CD8-positive, alpha-beta T cell (primary cell): ENCODE measurements at regions of chr16 and their contacts with region 1.

Region 1: GRCh38 chr16:2752035-2752849 is at the start of gene SRRM2:
- DNase-seq: peak; percentile 90 to 98 (median 95)
- ATAC-seq: peak; percentile 85
- H3K4me3 ChIP-seq: peak within 1 kb of the TSS; percentile 91 to 100
- H3K4me3 Mint-ChIP-seq: peak within 1 kb of the TSS; percentile 94
- H3K27ac ChIP-seq: peak within 1 kb of the TSS; percentile 96 to 99
- H3K27ac Mint-ChIP-seq: peak within 1 kb of the TSS; percentile 99
- H3K4me1 ChIP-seq: peaks cover 43% of the 10 kb centered on the region
- H3K4me1 Mint-ChIP-seq: peaks cover 44% of the 10 kb centered on the region
- H3K27me3 ChIP-seq: no peaks in the 10 kb centered on the region
- H3K27me3 Mint-ChIP-seq: no peaks in the 10 kb centered on the region
- CTCF ChIP-seq: no peak
- total RNA-seq, gene SRRM2: 1,249 to 1,283 TPM

Region 2: DNA sequence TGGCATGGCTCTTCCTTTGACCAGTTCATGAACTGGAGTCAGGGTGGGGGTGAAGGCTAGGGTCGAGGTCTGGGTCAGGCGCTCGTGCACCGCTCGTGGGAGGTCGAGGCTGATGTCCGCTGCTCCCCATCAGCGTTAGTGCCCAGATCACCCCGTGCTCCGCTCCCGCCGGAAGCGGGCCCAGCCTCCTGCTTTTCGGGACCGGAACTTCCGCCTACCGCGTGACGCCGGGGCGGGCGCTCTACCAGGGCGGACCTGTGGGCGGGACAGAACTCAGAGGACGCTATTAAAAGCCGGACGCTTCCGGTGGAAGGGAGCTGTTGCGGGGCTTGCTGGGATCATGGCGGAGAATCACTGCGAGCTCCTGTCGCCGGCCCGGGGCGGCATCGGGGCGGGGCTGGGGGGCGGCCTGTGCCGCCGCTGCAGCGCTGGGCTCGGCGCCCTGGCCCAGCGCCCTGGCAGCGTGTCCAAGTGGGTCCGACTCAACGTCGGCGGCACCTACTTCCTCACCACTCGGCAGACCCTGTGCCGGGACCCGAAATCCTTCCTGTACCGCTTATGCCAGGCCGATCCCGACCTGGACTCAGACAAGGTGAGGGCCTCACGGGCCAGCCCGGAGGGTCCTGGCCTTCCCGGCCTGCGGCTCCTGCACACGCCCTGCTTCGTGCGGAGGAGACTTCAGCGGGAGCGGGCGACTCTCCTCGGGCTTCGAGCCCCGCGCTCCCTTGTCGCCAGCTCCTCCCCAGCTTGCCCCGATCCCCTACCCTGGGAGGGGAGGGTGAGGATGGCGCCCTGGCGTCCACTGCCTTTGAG is 69.8 kb before region 1 on chr16 and contains the start of gene KCTD5:
- CTCF ChIA-PET with region 1: no interaction called
- POLR2A ChIA-PET with region 1: interaction called, 4 read pairs
- intact Hi-C with region 1: loop called in 1 of 2 experiments (anchors 1 kb)
- DNase-seq: peak; percentile 91 to 98 (median 96)
- ATAC-seq: peak; percentile 96
- H3K4me3 ChIP-seq: peak within 1 kb of the TSS; percentile 98 to 99
- H3K4me3 Mint-ChIP-seq: peak within 1 kb of the TSS; percentile 94
- H3K27ac ChIP-seq: peak within 1 kb of the TSS; percentile 73 to 85
- H3K27ac Mint-ChIP-seq: peak within 1 kb of the TSS; percentile 96
- H3K4me1 ChIP-seq: peaks cover 19% of the 10 kb centered on the region
- H3K4me1 Mint-ChIP-seq: peaks cover 32% of the 10 kb centered on the region
- H3K27me3 ChIP-seq: no peaks in the 10 kb centered on the region
- H3K27me3 Mint-ChIP-seq: no peaks in the 10 kb centered on the region
- CTCF ChIP-seq: no peak
- total RNA-seq, gene KCTD5: 34.2 to 36.0 TPM

Region 3: DNA sequence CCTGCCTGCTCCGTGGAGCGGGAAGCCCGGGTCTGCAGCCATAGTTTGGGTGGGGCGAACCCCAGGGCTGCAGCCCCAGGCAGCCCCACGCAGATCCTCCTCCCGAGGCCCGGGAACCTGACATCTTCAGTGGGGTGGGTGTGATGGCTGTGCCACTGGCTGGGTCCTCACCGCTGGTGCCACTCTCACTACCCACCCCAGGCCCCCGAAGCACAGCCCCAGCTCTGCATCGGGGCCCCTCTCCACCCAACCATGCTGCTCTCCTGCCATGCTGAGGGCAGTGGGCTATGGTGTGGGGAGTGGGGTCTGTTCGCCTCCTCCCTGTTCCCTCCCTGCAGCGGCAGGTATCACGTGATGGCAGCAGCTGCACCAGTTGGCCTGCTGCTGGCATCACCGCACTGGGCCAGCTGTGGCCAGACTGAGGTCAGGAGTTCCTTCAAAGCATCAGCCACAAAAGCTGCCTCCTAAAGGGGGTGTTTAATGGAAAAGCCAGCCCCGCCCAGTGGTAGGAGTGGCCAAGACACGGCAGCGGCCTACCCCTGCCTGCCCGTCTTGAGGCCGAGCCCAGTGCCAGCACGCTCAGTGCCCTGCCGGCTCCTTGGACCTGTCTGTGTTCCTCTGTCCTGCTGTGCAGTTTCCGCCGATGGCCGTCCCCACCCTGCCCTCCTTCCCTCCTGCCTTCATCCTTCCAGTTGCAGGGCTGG is 59.1 kb before region 1 on chr16:
- CTCF ChIA-PET with region 1: no interaction called
- POLR2A ChIA-PET with region 1: no interaction called
- intact Hi-C with region 1: no loop called
- DNase-seq: no peak
- ATAC-seq: no peak
- H3K4me3 ChIP-seq: no peak overlapping the region
- H3K4me3 Mint-ChIP-seq: no peak overlapping the region
- H3K27ac ChIP-seq: no peak overlapping the region
- H3K27ac Mint-ChIP-seq: no peak overlapping the region
- H3K4me1 ChIP-seq: no peaks in the 10 kb centered on the region
- H3K4me1 Mint-ChIP-seq: peaks cover 1% of the 10 kb centered on the region
- H3K27me3 ChIP-seq: no peaks in the 10 kb centered on the region
- H3K27me3 Mint-ChIP-seq: no peaks in the 10 kb centered on the region
- CTCF ChIP-seq: no peak

Region 4: DNA sequence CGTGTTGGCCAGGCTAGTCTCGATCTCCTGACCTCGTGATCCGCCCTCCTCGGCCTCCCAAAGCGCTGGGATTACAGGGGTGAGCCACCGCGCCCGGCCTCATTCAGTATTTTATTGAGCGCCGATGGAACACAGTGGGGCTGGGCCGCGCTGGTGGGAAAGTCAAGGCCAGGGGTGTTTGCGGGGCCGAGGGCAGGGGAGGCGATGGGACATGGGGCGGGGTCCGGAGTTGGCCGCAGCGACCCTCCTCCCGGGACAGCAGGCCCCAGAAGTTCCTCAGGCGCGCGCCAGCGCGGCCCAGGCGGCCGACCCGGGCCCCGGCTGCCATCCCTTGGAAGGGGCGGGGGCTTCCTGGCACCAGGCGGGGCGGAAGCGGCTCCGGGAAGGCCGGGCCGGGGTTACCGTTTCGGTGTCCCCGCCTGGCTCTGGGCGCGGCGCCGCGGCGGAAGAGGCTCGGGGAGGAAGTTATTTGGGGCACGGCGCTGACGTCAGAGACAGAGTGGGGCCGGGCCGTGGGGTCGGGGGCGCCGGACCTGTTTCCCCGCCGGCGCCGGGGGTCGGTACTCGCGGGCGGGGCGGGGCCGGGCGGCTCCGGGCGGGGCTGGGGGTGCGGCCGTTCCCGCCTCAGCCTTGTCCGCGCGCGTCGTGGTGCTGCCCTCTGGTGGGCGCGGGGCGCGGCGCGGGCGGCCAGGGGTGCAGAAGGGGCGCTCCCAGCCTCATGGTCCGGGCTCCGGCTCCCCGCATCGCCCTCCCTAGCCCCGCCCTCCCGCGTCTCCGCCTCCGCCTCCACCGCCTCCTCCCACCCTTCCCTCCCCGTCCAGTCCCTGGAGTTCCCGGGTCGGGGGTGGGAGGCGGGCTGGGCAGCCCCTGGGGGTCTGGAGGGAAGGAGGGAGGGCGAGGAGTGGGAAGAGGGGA is 31.3 kb before region 1 on chr16:
- CTCF ChIA-PET with region 1: no interaction called
- POLR2A ChIA-PET with region 1: interaction called, 5 read pairs
- intact Hi-C with region 1: loop called (anchors 1 kb)
- DNase-seq: peak; percentile 69 to 93 (median 82)
- ATAC-seq: peak; percentile 90
- H3K4me3 ChIP-seq: peak overlapping the region; percentile 52 to 62
- H3K4me3 Mint-ChIP-seq: peak overlapping the region; percentile 78
- H3K27ac ChIP-seq: peak overlapping the region; percentile 40 to 57
- H3K27ac Mint-ChIP-seq: peak overlapping the region; percentile 79
- H3K4me1 ChIP-seq: peaks cover 1% of the 10 kb centered on the region
- H3K4me1 Mint-ChIP-seq: no peaks in the 10 kb centered on the region
- H3K27me3 ChIP-seq: no peaks in the 10 kb centered on the region
- H3K27me3 Mint-ChIP-seq: peaks cover 12% of the 10 kb centered on the region
- CTCF ChIP-seq: peak; percentile 77

Region 5: DNA sequence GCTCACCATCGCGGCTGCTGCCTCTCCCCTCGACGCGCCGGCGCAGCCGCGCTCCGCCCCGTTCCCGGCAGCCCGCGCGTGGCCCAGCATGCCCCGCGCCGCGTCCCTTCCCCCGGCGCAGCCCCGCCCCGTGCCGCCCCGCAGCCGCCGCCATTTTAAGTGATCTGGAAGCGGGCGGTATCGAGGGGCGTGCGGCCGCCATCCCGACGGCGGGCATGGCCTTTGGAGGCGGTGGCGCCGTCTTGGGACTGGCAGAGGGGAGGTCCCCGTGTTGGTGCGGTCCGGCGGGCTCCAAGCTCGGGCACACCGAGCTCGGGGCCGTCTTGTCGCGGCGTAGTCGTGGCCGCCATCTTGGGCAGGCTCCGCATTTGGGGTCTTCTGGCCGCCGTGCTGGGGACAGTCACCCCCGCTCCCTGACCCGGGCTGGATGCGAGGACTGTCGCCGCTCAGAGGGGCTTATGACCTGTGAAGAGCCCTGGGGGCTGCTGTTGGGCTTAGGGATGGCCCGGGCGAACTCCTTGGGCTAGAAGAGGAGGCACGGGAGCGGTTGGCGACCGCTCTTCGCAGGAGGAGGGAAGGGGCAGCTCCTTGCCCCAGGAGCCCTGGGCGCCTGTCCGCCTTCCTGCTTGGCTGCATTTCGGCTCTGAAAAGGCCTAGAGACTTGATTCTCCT is 25.1 kb after region 1 on chr16 and contains the start of gene ELOB:
- CTCF ChIA-PET with region 1: interaction called, 4 read pairs
- POLR2A ChIA-PET with region 1: interaction called, 36 read pairs
- intact Hi-C with region 1: loop called (anchors 1 kb)
- DNase-seq: peak; percentile 78 to 94 (median 88)
- ATAC-seq: peak; percentile 90
- H3K4me3 ChIP-seq: peak within 1 kb of the TSS; percentile 84 to 92
- H3K4me3 Mint-ChIP-seq: peak within 1 kb of the TSS; percentile 95
- H3K27ac ChIP-seq: peak within 1 kb of the TSS; percentile 96 to 99
- H3K27ac Mint-ChIP-seq: peak within 1 kb of the TSS; percentile 98
- H3K4me1 ChIP-seq: peaks cover 30% of the 10 kb centered on the region
- H3K4me1 Mint-ChIP-seq: peaks cover 50% of the 10 kb centered on the region
- H3K27me3 ChIP-seq: no peaks in the 10 kb centered on the region
- H3K27me3 Mint-ChIP-seq: no peaks in the 10 kb centered on the region
- CTCF ChIP-seq: no peak
- total RNA-seq, gene ELOB: 70.3 to 71.5 TPM